PC-3 (cell line): ENCODE measurements at regions of chr5 and their contacts with region 1.

Region 1: GRCh38 chr5:151740336-151740942 is 18.0 kb downstream of the ATOX1 start:
- DNase-seq: peak; percentile 76
- ATAC-seq: peak; percentile 27
- H3K4me3 ChIP-seq: no peak overlapping the region
- H3K27ac ChIP-seq: peak overlapping the region; percentile 70
- H3K4me1 ChIP-seq: peaks cover 57% of the 10 kb centered on the region
- H3K27me3 ChIP-seq: no peaks in the 10 kb centered on the region
- CTCF ChIP-seq: peak; percentile 93

Region 2: GRCh38 chr5:151298063-151298855 is 442.2 kb before region 1 on chr5:
- CTCF ChIA-PET with region 1: no interaction called
- POLR2A ChIA-PET with region 1: no interaction called
- intact Hi-C with region 1: loop called (anchors 10 kb)
- DNase-seq: peak; percentile 78
- ATAC-seq: peak; percentile 53
- H3K4me3 ChIP-seq: no peak overlapping the region
- H3K27ac ChIP-seq: no peak overlapping the region
- H3K4me1 ChIP-seq: peaks cover 35% of the 10 kb centered on the region
- H3K27me3 ChIP-seq: no peaks in the 10 kb centered on the region
- CTCF ChIP-seq: peak; percentile 77

Region 3: GRCh38 chr5:151523335-151523734 is 217.1 kb before region 1 on chr5:
- CTCF ChIA-PET with region 1: no interaction called
- POLR2A ChIA-PET with region 1: no interaction called
- intact Hi-C with region 1: loop called (anchors 2 kb)
- DNase-seq: peak; percentile 76
- ATAC-seq: peak; percentile 88
- H3K4me3 ChIP-seq: no peak overlapping the region
- H3K27ac ChIP-seq: no peak overlapping the region
- H3K4me1 ChIP-seq: peaks cover 5% of the 10 kb centered on the region; the same call in 1 of the 2 replicates
- H3K27me3 ChIP-seq: no peaks in the 10 kb centered on the region
- CTCF ChIP-seq: peak; percentile 81

Region 4: GRCh38 chr5:151659001-151659754 is 81.3 kb before region 1 on chr5:
- CTCF ChIA-PET with region 1: interaction called, 28 read pairs
- POLR2A ChIA-PET with region 1: interaction called, 5 read pairs
- intact Hi-C with region 1: loop called (anchors 1 kb)
- DNase-seq: peak; percentile 79
- ATAC-seq: peak; percentile 82
- H3K4me3 ChIP-seq: no peak overlapping the region
- H3K27ac ChIP-seq: no peak overlapping the region
- H3K4me1 ChIP-seq: peaks cover 10% of the 10 kb centered on the region
- H3K27me3 ChIP-seq: no peaks in the 10 kb centered on the region
- CTCF ChIP-seq: peak; percentile 90

Region 5: DNA sequence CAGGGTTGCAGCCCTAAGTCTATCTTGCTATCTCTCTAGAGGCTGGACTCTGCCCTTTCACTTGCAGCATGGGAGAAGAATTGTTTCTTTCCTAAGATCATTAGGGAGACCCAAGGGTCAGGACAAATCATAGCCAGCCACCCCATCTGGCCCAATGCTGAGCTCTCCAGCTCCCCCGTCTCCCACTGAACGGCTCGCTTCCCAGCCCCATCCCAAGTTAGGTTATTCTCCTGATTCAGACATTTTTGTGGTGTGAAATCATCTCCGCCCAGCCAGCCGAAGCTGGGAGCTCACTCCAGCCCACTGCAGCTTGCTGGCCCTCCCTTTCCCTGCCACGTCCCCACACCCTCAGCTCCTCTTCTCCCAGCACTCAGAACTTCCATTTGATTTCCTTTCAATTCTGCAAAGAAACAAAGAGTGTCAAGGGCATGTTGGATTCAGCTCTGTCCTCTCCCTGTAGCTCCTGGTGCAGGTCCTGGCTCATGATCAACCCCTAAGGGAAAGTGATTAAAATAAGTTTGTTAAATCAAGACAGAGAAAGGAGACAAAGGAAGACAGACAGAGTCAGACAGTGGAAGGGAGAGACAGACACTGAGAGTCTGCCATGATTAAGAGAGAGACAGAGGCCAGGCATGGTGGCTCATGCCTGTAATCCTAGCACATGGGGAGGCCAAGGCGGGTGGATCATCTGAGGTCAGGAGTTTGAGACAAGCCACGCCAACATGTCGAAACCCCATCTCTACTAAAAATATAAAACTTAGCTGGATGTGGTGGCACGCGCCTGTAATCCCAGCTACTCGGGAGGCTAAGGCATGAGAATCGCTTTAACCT is 41.2 kb before region 1 on chr5:
- CTCF ChIA-PET with region 1: no interaction called
- POLR2A ChIA-PET with region 1: interaction called, 3 read pairs
- intact Hi-C with region 1: loop called (anchors 2 kb)
- DNase-seq: peak; percentile 85
- ATAC-seq: peak; percentile 98
- H3K4me3 ChIP-seq: 0 out of 2 replicates have a peak overlapping the region, but pooled peaks have one; percentile 29
- H3K27ac ChIP-seq: peak overlapping the region; percentile 72
- H3K4me1 ChIP-seq: peaks cover 12% of the 10 kb centered on the region
- H3K27me3 ChIP-seq: no peaks in the 10 kb centered on the region
- CTCF ChIP-seq: no peak

Region 6: DNA sequence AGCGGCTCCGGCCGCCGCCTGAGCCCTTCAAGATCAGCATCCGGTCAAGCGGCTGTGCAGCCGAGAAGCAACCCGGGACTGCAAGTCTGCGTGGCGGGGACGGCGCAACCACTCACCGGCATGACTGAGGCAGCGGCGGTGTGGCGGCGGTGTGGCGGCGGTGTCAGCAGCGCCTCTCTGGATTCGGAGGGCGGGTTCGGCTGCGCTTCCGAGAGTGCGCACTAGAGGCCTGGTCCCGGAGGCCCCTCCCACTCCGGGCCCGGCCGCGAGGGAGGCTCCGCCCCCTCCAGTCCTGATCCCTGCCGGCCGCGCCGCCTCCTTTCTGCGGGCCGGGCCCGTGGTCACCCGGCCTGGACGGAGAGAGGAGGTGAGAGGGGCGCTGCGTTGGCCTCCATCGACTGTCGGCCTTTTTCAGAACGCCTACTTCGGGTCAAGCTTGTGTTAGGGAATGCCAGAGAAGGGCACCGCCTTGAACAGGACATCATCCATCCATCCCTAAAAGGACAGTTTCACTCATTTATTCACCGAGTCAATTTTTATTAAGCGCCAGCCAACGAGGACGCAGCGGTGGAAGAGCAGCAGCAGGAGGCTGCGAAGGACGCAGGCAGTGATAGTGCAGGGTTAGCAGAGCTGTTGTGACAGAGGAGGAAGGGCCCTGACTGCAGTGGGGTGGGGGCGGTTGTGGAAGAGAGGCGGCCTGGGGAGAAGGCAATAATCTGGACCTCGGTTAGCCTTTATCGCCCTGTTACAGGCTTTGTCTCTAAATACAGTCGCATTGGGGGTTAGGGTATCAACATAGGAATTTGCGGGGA is 18.2 kb after region 1 on chr5 and contains the start of gene ATOX1:
- CTCF ChIA-PET with region 1: interaction called, 3 read pairs
- POLR2A ChIA-PET with region 1: no interaction called
- intact Hi-C with region 1: loop called (anchors 1 kb)
- DNase-seq: peak; percentile 92
- ATAC-seq: peak; percentile 97
- H3K4me3 ChIP-seq: peak within 1 kb of the TSS; percentile 91
- H3K27ac ChIP-seq: peak within 1 kb of the TSS; percentile 42
- H3K4me1 ChIP-seq: peaks cover 24% of the 10 kb centered on the region
- H3K27me3 ChIP-seq: no peaks in the 10 kb centered on the region
- CTCF ChIP-seq: 0 out of 2 replicates have a peak, but pooled peaks have one; percentile 13
- total RNA-seq, gene ATOX1: 81.4 and 122 TPM in 2 replicates